Esophagus muscularis mucosa (tissue), 4 donors: ENCODE measurements at regions of chr19 and their contacts with region 1.

Region 1: DNA sequence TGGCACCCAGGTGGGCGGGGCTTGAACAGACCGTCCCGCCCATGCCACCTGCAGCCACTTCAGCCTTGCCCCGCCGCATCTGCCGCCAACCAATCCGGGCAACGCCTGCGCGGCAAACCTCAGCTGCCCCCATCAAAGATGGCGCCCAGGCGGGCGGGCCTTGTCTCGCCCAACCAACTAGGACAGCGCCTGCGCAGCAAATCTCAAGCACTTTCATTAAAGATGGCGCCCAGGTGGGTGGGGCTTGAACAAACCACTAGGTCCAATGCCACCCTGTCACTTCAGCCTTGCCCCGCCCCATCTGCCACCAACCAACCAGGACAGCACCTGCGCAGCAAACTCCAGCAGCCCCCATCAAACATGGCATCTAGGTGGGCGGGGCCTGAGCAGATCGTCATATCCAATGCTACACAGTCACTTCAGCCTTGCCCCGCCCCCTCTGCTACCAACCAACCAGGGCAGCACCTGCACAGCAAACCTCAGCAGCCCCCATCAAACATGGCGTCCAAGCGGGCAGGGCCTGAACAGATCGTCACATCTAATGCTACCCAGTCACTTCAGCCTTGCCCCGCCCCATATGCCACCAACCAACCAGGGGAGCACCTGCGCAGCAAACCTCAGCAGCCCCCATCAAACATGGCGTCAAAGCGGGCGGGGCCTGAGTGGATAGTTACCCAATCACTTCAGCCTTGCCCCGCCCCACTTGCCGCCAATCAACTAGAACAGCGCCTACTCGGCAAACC is 1.4 kb downstream of the PEG3 start:
- DNase-seq: peak; percentile 98
- H3K4me3 ChIP-seq: peak overlapping the region; percentile 59 to 69 (median 61)
- H3K27ac ChIP-seq: peak overlapping the region; percentile 86 to 96 (median 88)
- H3K4me1 ChIP-seq: peaks cover 4 to 27% (median 17%) of the 10 kb centered on the region in 4 donors
- H3K27me3 ChIP-seq: no peaks in the 10 kb centered on the region
- CTCF ChIP-seq: no peak
- EP300 ChIP-seq: no peak
- POLR2A ChIP-seq: no peak

Region 2: DNA sequence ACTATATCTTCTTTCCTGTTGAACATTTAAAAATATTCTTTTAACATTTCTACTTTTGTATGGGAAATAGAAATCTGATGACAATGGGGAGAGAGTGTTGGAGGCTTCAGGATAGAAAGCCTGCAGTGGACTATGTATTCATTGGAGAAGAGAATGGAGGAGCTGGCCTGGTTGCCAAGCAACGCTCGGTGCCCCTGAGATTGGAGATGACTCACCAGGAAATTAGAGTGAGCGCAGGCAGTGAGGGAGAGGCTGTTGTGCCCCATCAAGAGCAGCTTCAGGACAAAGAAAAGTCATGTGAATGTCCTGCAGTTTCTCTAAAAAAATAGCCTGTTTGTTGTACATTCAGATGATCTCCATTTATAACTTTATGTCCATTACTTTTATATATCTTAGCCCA is 118.8 kb before region 1 on chr19:
- intact Hi-C with region 1: no loop called
- DNase-seq: no peak
- H3K4me3 ChIP-seq: no peak overlapping the region
- H3K27ac ChIP-seq: no peak overlapping the region
- H3K4me1 ChIP-seq: no peaks in the 10 kb centered on the region
- H3K27me3 ChIP-seq: no peaks in the 10 kb centered on the region
- CTCF ChIP-seq: no peak
- EP300 ChIP-seq: no peak
- POLR2A ChIP-seq: no peak

Region 3: DNA sequence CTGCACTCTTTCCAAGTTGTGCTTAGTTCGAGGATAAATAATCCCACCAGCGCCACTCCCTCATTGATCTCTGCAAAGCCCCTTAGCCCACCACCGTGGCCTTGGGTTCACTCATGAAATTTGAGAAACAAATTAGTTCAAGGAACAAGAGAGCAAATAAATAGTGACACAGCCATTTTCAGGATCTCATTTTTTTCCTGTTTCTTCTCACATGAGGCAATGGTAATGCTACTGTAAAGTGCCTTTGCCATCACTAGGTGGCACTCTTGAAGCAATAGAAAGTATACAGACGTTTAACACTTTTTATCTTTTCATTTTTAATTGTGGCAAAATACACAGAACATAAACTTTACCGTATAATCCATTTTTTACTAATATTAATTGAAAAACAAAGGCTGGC is 90.7 kb before region 1 on chr19:
- intact Hi-C with region 1: loop called (anchors 5 kb)
- DNase-seq: peak; percentile 75
- H3K4me3 ChIP-seq: no peak overlapping the region
- H3K27ac ChIP-seq: no peak overlapping the region
- H3K4me1 ChIP-seq: peaks cover 0 to 8% (median 7%) of the 10 kb centered on the region in 4 donors
- H3K27me3 ChIP-seq: no peaks in the 10 kb centered on the region
- CTCF ChIP-seq: peak; percentile 56 to 70 (median 65)
- EP300 ChIP-seq: no peak
- POLR2A ChIP-seq: no peak

Region 4: GRCh38 chr19:56866538-56866937 is 27.5 kb after region 1 on chr19:
- intact Hi-C with region 1: no loop called
- DNase-seq: no peak
- H3K4me3 ChIP-seq: no peak overlapping the region
- H3K27ac ChIP-seq: no peak overlapping the region
- H3K4me1 ChIP-seq: no peaks in the 10 kb centered on the region
- H3K27me3 ChIP-seq: peaks cover 0 to 13% (median 0%) of the 10 kb centered on the region in 4 donors
- CTCF ChIP-seq: no peak
- EP300 ChIP-seq: no peak
- POLR2A ChIP-seq: no peak

Region 5: DNA sequence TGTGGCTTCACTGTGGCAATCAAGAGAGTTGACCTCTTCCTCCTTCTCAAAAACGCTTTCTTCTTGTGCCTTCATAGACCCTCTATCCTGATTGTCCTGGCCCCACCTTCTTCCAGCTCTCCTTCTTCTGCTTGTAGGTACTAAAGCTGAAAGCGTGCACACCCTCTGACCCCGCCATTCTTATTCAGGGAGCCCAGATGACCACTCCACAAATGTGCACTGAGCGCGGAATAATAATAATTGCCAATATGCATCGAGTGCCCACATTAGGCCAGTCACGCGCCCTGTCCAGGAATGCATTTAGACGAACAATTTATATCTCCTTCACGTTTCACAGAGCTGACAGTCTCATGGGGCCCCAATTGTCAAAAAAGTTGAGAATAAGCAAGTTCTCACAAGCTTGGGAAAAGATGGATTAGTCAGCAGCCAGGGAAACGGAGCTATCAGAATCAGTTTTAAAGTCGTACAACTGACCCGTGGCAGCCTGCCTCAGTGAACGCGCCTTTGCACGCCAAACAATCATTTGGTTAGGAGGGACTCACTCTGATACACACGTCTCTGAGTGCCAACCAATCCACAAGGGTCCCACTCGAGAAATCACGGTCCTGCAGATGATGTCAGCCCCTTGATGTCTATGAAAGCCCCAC is 38.1 kb after region 1 on chr19:
- intact Hi-C with region 1: no loop called
- DNase-seq: no peak
- H3K4me3 ChIP-seq: no peak overlapping the region
- H3K27ac ChIP-seq: no peak overlapping the region
- H3K4me1 ChIP-seq: no peaks in the 10 kb centered on the region
- H3K27me3 ChIP-seq: no peaks in the 10 kb centered on the region
- CTCF ChIP-seq: no peak
- EP300 ChIP-seq: no peak
- POLR2A ChIP-seq: no peak

Region 6: GRCh38 chr19:57099199-57099661 is 260.1 kb after region 1 on chr19:
- intact Hi-C with region 1: loop called (anchors 10 kb)
- DNase-seq: no peak
- H3K4me3 ChIP-seq: no peak overlapping the region
- H3K27ac ChIP-seq: no peak overlapping the region
- H3K4me1 ChIP-seq: peaks cover 4 to 26% (median 17%) of the 10 kb centered on the region in 4 donors
- H3K27me3 ChIP-seq: peaks cover 0 to 26% (median 0%) of the 10 kb centered on the region in 4 donors
- CTCF ChIP-seq: peak; percentile 86 to 94 (median 91)
- EP300 ChIP-seq: no peak
- POLR2A ChIP-seq: no peak